Natural killer cell (primary cell): ENCODE measurements at regions of chr7 and their contacts with region 1.

Region 1: GRCh38 chr7:99386584-99387238 is 12.2 kb downstream of the ARPC1B start:
- DNase-seq: peak in 1 of 2 donors; percentile 71
- ATAC-seq: peak; percentile 55 to 77 (median 70)
- H3K4me3 ChIP-seq: no peak overlapping the region
- H3K4me3 Mint-ChIP-seq: no peak overlapping the region
- H3K27ac ChIP-seq: no peak overlapping the region
- H3K27ac Mint-ChIP-seq: peak overlapping the region; percentile 84 to 97
- H3K4me1 ChIP-seq: peaks cover 39% of the 10 kb centered on the region
- H3K4me1 Mint-ChIP-seq: peaks cover 10 to 34% of the 10 kb centered on the region in 2 donors
- H3K27me3 ChIP-seq: no peaks in the 10 kb centered on the region
- H3K27me3 Mint-ChIP-seq: no peaks in the 10 kb centered on the region
- CTCF ChIP-seq: peak; percentile 25

Region 2: DNA sequence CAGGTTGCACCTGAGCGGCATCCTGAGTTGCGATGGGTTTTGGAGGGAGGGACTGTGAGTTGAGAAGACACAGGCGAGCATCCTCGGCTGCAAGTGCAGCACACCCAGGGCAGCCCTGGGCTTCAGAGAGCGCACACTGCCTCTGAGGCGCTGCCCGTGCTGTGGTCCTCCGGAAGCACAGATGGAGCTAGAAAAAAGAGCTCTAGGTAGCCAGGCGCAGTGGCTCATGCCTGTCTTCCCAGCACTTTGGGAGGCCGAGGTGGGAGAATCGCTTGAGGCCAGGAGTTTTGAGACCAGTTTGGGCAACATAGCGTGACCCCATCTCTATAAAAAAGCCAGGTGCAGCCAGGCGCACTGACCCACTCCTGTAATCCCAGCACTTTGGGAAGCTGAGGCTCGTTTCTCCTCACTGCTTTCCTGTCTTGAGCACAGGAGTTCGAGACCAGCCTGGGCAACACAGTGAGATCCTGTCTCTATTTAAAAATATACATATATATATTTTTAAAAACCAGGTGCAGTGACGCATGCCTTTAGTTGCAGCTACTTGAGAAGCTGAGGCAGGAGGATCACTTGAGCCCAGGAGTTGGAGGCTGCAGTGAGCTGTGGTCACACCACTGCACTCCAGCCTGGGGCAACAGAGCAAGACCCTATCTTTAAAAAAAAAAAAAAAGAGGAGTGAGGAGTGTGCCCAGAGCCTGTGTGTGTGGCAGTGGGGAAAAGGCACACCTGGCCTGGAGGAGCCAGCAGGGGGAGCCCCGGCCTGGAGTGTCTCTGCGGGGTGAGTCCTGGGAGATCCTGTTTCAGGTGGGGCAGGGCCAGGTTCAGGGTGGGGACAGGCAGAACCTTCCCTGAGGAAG is 21.5 kb before region 1 on chr7:
- intact Hi-C with region 1: loop called (anchors 1 kb)
- DNase-seq: peak; percentile 55 to 81
- ATAC-seq: peak; percentile 57 to 84 (median 83)
- H3K4me3 ChIP-seq: no peak overlapping the region
- H3K4me3 Mint-ChIP-seq: no peak overlapping the region
- H3K27ac ChIP-seq: no peak overlapping the region
- H3K27ac Mint-ChIP-seq: no peak overlapping the region
- H3K4me1 ChIP-seq: no peaks in the 10 kb centered on the region
- H3K4me1 Mint-ChIP-seq: peaks cover 0 to 4% of the 10 kb centered on the region in 2 donors
- H3K27me3 ChIP-seq: no peaks in the 10 kb centered on the region
- H3K27me3 Mint-ChIP-seq: no peaks in the 10 kb centered on the region
- CTCF ChIP-seq: peak; percentile 52